CD8-positive, alpha-beta T cell (primary cell): ENCODE measurements at regions of chr13 and their contacts with region 1.

Region 1: DNA sequence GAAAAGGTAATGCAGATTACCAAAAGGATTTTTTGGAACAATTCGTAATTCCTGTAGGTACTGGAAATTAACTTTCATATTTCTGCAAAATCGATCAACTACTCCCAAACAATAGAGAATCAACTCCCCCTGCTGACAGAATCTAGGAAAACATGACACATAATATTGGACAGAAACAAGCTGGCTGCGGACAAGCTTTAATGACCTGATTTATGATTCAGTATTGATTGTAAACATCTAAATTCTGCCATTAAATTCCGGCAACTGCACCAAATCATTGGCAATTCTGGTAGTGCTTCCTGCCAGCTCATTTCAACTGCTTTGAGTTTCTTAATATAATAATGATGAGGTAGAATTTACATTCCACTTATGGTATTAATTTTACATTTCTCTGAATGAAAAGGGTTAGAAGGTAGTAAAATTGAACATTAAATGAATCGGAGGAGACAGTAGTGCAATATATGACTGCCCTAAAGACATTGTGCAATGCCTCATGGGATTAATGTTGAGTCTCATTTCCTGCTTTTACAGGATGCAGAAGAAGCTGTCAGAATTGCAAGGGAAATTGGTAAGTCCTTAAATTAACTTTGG is 146.5 kb downstream of the PCCA start:
- DNase-seq: peak in 3 of 9 experiments; percentile 15 to 66 (median 57)
- ATAC-seq: no peak
- H3K4me3 ChIP-seq: no peak overlapping the region
- H3K4me3 Mint-ChIP-seq: no peak overlapping the region
- H3K27ac ChIP-seq: no peak overlapping the region
- H3K27ac Mint-ChIP-seq: no peak overlapping the region
- H3K4me1 ChIP-seq: peaks cover 9% of the 10 kb centered on the region
- H3K4me1 Mint-ChIP-seq: peaks cover 4% of the 10 kb centered on the region
- H3K27me3 ChIP-seq: no peaks in the 10 kb centered on the region
- H3K27me3 Mint-ChIP-seq: no peaks in the 10 kb centered on the region
- CTCF ChIP-seq: peak; percentile 62

Region 2: GRCh38 chr13:98581971-98582680 is 1653.3 kb before region 1 on chr13:
- CTCF ChIA-PET with region 1: no interaction called
- POLR2A ChIA-PET with region 1: no interaction called
- intact Hi-C with region 1: no loop called
- DNase-seq: no peak
- ATAC-seq: no peak
- H3K4me3 ChIP-seq: no peak overlapping the region
- H3K4me3 Mint-ChIP-seq: no peak overlapping the region
- H3K27ac ChIP-seq: no peak overlapping the region
- H3K27ac Mint-ChIP-seq: peak overlapping the region; percentile 11
- H3K4me1 ChIP-seq: peaks cover 6% of the 10 kb centered on the region
- H3K4me1 Mint-ChIP-seq: peaks cover 4% of the 10 kb centered on the region
- H3K27me3 ChIP-seq: no peaks in the 10 kb centered on the region
- H3K27me3 Mint-ChIP-seq: no peaks in the 10 kb centered on the region
- CTCF ChIP-seq: no peak

Region 3: GRCh38 chr13:99281811-99282263 is 953.6 kb before region 1 on chr13:
- CTCF ChIA-PET with region 1: no interaction called
- POLR2A ChIA-PET with region 1: no interaction called
- intact Hi-C with region 1: loop called in 1 of 2 experiments (anchors 5 kb)
- DNase-seq: peak in 6 of 9 experiments; percentile 59 to 81 (median 71)
- ATAC-seq: peak; percentile 65
- H3K4me3 ChIP-seq: no peak overlapping the region
- H3K4me3 Mint-ChIP-seq: peak overlapping the region; percentile 38
- H3K27ac ChIP-seq: peak overlapping the region; percentile 53 to 73
- H3K27ac Mint-ChIP-seq: peak overlapping the region; percentile 95
- H3K4me1 ChIP-seq: peaks cover 92% of the 10 kb centered on the region
- H3K4me1 Mint-ChIP-seq: peaks cover 90% of the 10 kb centered on the region
- H3K27me3 ChIP-seq: no peaks in the 10 kb centered on the region
- H3K27me3 Mint-ChIP-seq: no peaks in the 10 kb centered on the region
- CTCF ChIP-seq: no peak

Region 4: DNA sequence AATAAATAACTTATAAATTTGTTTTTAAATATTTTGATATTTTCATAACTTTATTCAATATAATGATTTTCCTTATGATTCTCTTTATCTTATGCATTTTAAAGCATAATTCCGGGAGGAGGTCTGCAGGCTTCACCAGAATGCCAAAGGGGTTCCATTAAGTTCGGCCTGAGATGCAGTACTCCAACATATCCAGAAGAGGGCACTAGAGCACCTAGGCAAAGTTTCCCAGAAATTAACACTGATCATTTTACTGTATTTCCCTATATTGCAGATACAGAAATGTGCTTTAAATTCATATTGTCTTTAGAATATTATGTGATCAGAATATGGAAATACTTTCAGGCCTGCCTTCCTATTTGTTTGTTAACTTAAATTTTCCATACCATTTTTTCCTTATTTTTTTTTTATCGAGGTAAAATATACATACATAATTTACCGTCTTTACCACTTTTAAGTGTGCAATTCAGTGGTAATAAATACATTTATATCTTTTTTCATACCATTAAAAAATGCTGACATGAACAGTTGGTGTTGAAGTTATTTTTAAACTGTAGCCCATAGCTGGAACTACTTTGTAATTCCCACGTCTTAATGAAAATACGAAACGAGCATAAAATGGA is 793.0 kb before region 1 on chr13:
- CTCF ChIA-PET with region 1: interaction called, 4 read pairs
- POLR2A ChIA-PET with region 1: no interaction called
- intact Hi-C with region 1: loop called (anchors 1 to 5 kb)
- DNase-seq: peak in 7 of 9 experiments; percentile 40 to 78 (median 59)
- ATAC-seq: peak; percentile 92
- H3K4me3 ChIP-seq: no peak overlapping the region
- H3K4me3 Mint-ChIP-seq: no peak overlapping the region
- H3K27ac ChIP-seq: no peak overlapping the region
- H3K27ac Mint-ChIP-seq: no peak overlapping the region
- H3K4me1 ChIP-seq: peaks cover 4% of the 10 kb centered on the region
- H3K4me1 Mint-ChIP-seq: peaks cover 5% of the 10 kb centered on the region
- H3K27me3 ChIP-seq: no peaks in the 10 kb centered on the region
- H3K27me3 Mint-ChIP-seq: no peaks in the 10 kb centered on the region
- CTCF ChIP-seq: peak; percentile 99

Region 5: DNA sequence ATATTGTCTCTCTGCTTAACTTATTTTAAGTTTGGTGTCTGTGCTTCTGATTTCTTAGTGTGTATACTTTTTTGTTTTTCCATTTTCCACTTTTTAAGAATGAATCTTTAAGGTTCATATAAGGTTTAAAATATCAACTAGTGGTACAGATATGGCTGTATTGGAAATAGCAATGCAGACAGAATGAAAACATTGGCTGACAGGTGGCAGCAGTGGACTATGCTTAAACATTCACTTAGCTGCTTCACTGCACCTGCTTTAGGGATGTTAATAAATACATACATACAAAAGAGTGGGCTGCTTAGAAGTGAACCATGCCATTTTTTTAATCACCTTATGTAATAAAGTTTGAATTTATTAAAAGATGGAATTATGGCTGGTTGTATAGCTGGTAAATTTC is 706.9 kb before region 1 on chr13:
- CTCF ChIA-PET with region 1: interaction called, 3 read pairs
- POLR2A ChIA-PET with region 1: no interaction called
- intact Hi-C with region 1: loop called in 1 of 2 experiments (anchors 5 kb)
- DNase-seq: peak in 4 of 9 experiments; percentile 13 to 59 (median 36)
- ATAC-seq: peak; percentile 46
- H3K4me3 ChIP-seq: no peak overlapping the region
- H3K4me3 Mint-ChIP-seq: no peak overlapping the region
- H3K27ac ChIP-seq: no peak overlapping the region
- H3K27ac Mint-ChIP-seq: no peak overlapping the region
- H3K4me1 ChIP-seq: peaks cover 12% of the 10 kb centered on the region
- H3K4me1 Mint-ChIP-seq: peaks cover 46% of the 10 kb centered on the region
- H3K27me3 ChIP-seq: no peaks in the 10 kb centered on the region
- H3K27me3 Mint-ChIP-seq: no peaks in the 10 kb centered on the region
- CTCF ChIP-seq: peak; percentile 32

Region 6: DNA sequence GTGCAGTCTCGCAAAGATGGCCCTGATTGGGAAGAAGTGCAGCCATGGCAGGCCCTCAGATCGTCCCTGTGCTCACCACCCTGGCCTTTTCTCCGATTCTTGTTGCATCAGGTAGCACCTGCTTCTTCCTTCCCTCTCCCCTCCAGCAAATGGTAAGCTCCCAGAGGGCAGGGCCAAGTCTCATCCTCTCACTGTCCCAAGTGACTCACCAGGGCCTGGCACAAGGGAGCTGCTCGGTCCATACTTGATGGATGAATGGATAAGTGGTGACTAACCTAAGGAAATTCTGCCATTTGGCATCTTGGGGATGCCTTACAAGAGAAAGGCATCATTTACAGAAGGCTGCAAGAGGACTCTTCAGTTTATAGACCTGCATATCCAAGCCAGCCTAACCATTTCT is 348.7 kb before region 1 on chr13:
- CTCF ChIA-PET with region 1: no interaction called
- POLR2A ChIA-PET with region 1: no interaction called
- intact Hi-C with region 1: no loop called
- DNase-seq: no peak
- ATAC-seq: no peak
- H3K4me3 ChIP-seq: no peak overlapping the region
- H3K4me3 Mint-ChIP-seq: no peak overlapping the region
- H3K27ac ChIP-seq: no peak overlapping the region
- H3K27ac Mint-ChIP-seq: no peak overlapping the region
- H3K4me1 ChIP-seq: no peaks in the 10 kb centered on the region
- H3K4me1 Mint-ChIP-seq: no peaks in the 10 kb centered on the region
- H3K27me3 ChIP-seq: no peaks in the 10 kb centered on the region
- H3K27me3 Mint-ChIP-seq: no peaks in the 10 kb centered on the region
- CTCF ChIP-seq: no peak

Region 7: DNA sequence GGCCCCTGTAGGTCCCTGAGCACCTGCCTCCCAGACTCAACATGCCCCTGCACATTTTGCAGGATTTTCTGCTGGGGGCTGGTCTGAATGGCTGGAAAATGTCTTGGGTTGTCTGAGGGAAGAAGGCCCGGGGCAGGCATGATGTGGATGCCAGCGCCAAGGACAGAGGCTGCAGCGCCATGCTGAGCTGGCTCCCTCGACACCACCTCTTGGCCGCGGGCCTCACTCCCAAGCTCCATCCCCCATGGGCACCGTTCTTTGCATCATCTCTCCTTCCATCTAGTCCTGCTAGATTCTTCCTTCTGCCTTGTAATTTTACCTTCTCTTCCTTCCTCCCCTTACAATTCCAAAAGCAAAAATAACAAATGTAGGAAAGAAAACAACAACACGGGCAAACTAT is 334.4 kb before region 1 on chr13:
- CTCF ChIA-PET with region 1: interaction called, 4 read pairs
- POLR2A ChIA-PET with region 1: no interaction called
- intact Hi-C with region 1: loop called in 1 of 2 experiments (anchors 5 kb)
- DNase-seq: no peak
- ATAC-seq: no peak
- H3K4me3 ChIP-seq: no peak overlapping the region
- H3K4me3 Mint-ChIP-seq: no peak overlapping the region
- H3K27ac ChIP-seq: no peak overlapping the region
- H3K27ac Mint-ChIP-seq: no peak overlapping the region
- H3K4me1 ChIP-seq: peaks cover 4% of the 10 kb centered on the region
- H3K4me1 Mint-ChIP-seq: peaks cover 7% of the 10 kb centered on the region
- H3K27me3 ChIP-seq: peaks cover 6 to 8% of the 10 kb centered on the region in 2 experiments
- H3K27me3 Mint-ChIP-seq: peaks cover 61% of the 10 kb centered on the region
- CTCF ChIP-seq: no peak

Region 8: DNA sequence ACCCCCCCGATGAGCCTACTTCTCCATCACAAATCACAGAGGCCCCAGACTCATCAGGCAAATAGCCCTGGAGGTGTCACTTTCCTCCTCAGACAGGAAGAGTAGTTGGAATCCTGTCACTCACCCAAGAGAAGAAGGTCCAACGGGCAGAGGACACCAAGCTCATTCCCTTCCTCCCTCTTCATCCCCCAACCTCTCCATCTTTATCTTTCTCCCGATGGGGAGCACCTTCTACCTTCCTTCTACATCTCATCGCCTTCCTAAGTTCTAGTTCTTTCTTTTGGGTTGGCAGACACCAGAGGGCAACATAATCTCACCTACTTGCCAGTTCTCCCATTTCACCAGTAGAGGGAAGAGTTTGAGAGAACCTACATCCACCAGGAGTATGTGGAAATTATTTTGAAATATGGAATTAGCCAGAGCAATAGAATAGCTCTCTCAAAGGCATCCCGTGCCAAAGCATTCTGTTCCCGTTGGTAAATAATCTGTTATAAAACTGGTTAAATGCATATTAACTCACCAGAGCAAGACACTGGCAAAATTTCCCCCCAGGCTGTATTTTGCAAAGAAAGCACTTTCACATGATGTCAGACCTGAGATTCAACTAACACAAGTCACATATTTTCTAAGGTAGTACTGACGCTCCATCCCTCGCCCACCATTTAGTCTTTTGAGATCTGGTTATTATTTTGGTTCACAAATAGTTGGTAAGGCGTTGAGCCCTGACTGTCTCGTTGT is 318.9 kb before region 1 on chr13:
- CTCF ChIA-PET with region 1: interaction called, 47 read pairs
- POLR2A ChIA-PET with region 1: no interaction called
- intact Hi-C with region 1: loop called (anchors 1 kb)
- DNase-seq: peak in 2 of 9 experiments; percentile 60 to 73
- ATAC-seq: peak; percentile 86
- H3K4me3 ChIP-seq: no peak overlapping the region
- H3K4me3 Mint-ChIP-seq: no peak overlapping the region
- H3K27ac ChIP-seq: no peak overlapping the region
- H3K27ac Mint-ChIP-seq: no peak overlapping the region
- H3K4me1 ChIP-seq: no peaks in the 10 kb centered on the region
- H3K4me1 Mint-ChIP-seq: peaks cover 11% of the 10 kb centered on the region
- H3K27me3 ChIP-seq: no peaks in the 10 kb centered on the region
- H3K27me3 Mint-ChIP-seq: peaks cover 17% of the 10 kb centered on the region
- CTCF ChIP-seq: peak; percentile 83

Region 9: GRCh38 chr13:100039740-100040139 is 195.7 kb before region 1 on chr13:
- CTCF ChIA-PET with region 1: no interaction called
- POLR2A ChIA-PET with region 1: no interaction called
- intact Hi-C with region 1: loop called in 1 of 2 experiments (anchors 10 kb)
- DNase-seq: no peak
- ATAC-seq: no peak
- H3K4me3 ChIP-seq: no peak overlapping the region
- H3K4me3 Mint-ChIP-seq: no peak overlapping the region
- H3K27ac ChIP-seq: no peak overlapping the region
- H3K27ac Mint-ChIP-seq: no peak overlapping the region
- H3K4me1 ChIP-seq: no peaks in the 10 kb centered on the region
- H3K4me1 Mint-ChIP-seq: no peaks in the 10 kb centered on the region
- H3K27me3 ChIP-seq: no peaks in the 10 kb centered on the region
- H3K27me3 Mint-ChIP-seq: peaks cover 3% of the 10 kb centered on the region
- CTCF ChIP-seq: no peak